T-cell (primary cell): ENCODE measurements at regions of chr3 and their contacts with region 1.

Region 1: DNA sequence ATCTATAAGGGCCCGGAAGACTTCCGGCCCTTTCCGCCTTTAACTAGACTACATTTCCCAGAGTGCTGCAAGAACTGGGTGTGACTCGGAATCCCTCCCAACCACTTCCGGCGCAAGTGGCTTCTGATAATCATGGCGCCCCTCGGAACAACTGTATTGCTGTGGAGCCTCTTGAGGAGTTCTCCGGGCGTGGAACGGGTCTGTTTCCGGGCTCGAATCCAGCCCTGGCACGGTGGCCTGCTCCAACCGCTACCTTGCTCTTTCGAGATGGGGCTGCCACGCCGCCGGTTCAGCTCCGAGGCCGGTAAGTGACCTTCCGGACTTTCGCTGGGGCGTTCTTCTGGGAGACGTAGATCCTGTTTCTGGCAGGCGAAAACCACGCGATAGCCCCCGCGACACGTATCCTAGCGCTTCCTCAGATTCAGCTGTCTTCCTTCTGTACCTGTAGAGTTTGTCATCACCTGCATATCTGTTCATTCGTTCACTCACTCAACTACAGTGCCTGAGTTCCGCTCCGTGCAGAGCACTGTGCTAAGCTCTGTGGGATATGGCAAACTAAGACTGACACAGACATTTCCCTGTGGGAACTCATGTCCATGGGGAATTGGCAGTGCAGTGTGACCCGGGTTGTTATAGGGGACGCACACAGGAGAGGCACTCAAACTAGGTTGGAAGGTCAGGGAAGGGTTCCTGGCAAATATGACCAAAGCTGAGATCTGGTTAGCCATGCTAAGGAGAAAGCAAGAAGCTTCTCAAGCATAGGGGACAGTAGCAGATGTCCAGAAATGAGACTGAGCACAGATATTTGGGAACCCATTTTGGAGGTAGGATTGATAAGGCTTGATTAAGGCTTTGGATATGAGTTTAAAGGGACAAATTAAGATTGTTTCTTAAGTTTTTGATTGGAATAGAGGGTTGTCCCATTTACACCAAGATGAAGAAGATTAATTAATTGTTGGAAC is at the start of gene MRPS22:
- DNase-seq: peak; percentile 56 to 88 (median 78)
- ATAC-seq: peak; percentile 97 to 100 (median 99)
- H3K4me3 ChIP-seq: peak within 1 kb of the TSS; percentile 75 to 99
- H3K4me3 Mint-ChIP-seq: peak within 1 kb of the TSS in 1 of 3 donors; percentile 46
- H3K27ac ChIP-seq: peak within 1 kb of the TSS; percentile 60
- H3K27ac Mint-ChIP-seq: peak within 1 kb of the TSS in 1 of 2 donors; percentile 24
- H3K4me1 ChIP-seq: peaks cover 17 to 18% of the 10 kb centered on the region in 2 experiments
- H3K4me1 Mint-ChIP-seq: peaks cover 8 to 15% (median 12%) of the 10 kb centered on the region in 3 donors
- H3K27me3 ChIP-seq: peaks cover 0 to 5% of the 10 kb centered on the region in 2 experiments
- H3K27me3 Mint-ChIP-seq: peaks cover 3 to 5% of the 10 kb centered on the region in 2 donors
- total RNA-seq, gene MRPS22: 32.4 to 36.9 (median 33.9) TPM

Region 2: DNA sequence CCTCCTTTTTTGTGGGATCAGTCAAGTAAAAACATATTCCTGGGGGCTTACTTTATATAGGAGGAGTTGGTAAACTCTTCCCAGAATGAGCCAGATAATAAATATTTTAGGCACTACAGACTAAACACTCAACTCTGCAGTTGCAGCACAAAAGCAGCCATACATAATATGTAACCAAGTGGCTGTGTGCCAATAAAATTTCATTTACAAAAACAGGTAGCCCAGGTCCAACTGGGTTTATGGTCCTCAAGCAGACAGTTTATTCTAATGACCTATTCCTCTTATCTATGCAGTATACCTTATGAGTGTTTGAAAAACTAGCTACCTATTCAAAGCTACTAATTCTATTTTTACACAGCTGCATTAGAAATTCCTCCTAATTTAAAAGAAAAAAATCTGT is 673.8 kb before region 1 on chr3:
- CTCF ChIA-PET with region 1: no interaction called
- POLR2A ChIA-PET with region 1: interaction called in 1 of 2 experiments, 12 read pairs
- DNase-seq: no peak
- ATAC-seq: no peak
- H3K4me3 ChIP-seq: no peak overlapping the region
- H3K4me3 Mint-ChIP-seq: no peak overlapping the region
- H3K27ac ChIP-seq: no peak overlapping the region
- H3K27ac Mint-ChIP-seq: no peak overlapping the region
- H3K4me1 ChIP-seq: no peaks in the 10 kb centered on the region
- H3K4me1 Mint-ChIP-seq: peaks cover 0 to 6% (median 0%) of the 10 kb centered on the region in 3 donors
- H3K27me3 ChIP-seq: no peaks in the 10 kb centered on the region
- H3K27me3 Mint-ChIP-seq: no peaks in the 10 kb centered on the region

Region 3: DNA sequence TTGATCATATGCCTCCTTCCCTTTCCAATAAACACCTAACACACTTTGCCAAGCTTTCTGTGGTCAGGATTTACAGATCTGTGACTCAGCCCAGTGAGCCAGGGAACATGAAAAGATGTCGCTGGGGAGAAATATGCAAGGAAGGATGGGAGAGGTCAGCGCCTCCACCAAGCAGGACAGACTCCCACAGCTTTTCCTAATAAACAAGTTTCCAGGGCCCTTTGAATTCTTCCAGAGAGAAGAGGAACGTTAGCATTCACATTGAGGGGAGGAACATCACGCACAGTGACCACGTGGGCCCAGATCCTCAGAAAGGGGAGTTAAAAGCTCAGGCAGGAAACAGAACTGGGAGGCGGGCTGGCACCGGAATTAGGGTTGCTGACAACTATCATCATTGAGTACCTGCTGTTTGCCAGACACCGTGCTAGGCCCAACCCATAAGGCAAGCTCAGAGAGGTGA is 33.7 kb before region 1 on chr3:
- CTCF ChIA-PET with region 1: no interaction called
- POLR2A ChIA-PET with region 1: no interaction called
- DNase-seq: no peak
- ATAC-seq: no peak
- H3K4me3 ChIP-seq: no peak overlapping the region
- H3K4me3 Mint-ChIP-seq: no peak overlapping the region
- H3K27ac ChIP-seq: no peak overlapping the region
- H3K27ac Mint-ChIP-seq: no peak overlapping the region
- H3K4me1 ChIP-seq: no peaks in the 10 kb centered on the region
- H3K4me1 Mint-ChIP-seq: no peaks in the 10 kb centered on the region
- H3K27me3 ChIP-seq: peaks cover 0 to 18% of the 10 kb centered on the region in 2 experiments
- H3K27me3 Mint-ChIP-seq: peaks cover 16% of the 10 kb centered on the region in 2 donors

Region 4: GRCh38 chr3:139561959-139562676 is 217.9 kb after region 1 on chr3:
- CTCF ChIA-PET with region 1: no interaction called
- POLR2A ChIA-PET with region 1: no interaction called
- DNase-seq: no peak
- ATAC-seq: no peak
- H3K4me3 ChIP-seq: no peak overlapping the region
- H3K4me3 Mint-ChIP-seq: no peak overlapping the region
- H3K27ac ChIP-seq: no peak overlapping the region
- H3K27ac Mint-ChIP-seq: no peak overlapping the region
- H3K4me1 ChIP-seq: no peaks in the 10 kb centered on the region
- H3K4me1 Mint-ChIP-seq: no peaks in the 10 kb centered on the region
- H3K27me3 ChIP-seq: no peaks in the 10 kb centered on the region
- H3K27me3 Mint-ChIP-seq: no peaks in the 10 kb centered on the region

Region 5: DNA sequence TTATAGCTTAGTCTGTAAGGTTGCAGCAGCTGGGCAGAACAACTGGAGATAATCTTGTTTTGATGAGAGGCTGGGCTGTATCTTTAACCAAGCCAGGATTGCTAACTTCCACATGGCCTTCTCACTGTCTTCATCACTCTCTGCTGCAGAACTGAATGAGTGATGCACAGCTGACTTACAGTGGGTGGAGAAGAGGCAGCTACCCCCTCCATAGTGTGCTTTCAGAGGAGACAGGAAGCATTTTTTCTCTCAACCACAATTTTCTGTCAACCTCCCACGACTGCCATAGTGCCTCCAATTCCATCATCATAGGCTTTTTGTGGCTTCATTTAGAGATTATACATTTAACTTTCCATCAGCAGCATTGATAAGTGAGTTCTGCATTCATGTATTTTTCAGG is 759.0 kb after region 1 on chr3:
- CTCF ChIA-PET with region 1: no interaction called
- POLR2A ChIA-PET with region 1: no interaction called
- DNase-seq: no peak
- ATAC-seq: no peak
- H3K4me3 ChIP-seq: no peak overlapping the region
- H3K4me3 Mint-ChIP-seq: no peak overlapping the region
- H3K27ac ChIP-seq: no peak overlapping the region
- H3K27ac Mint-ChIP-seq: no peak overlapping the region
- H3K4me1 ChIP-seq: no peaks in the 10 kb centered on the region
- H3K4me1 Mint-ChIP-seq: no peaks in the 10 kb centered on the region
- H3K27me3 ChIP-seq: no peaks in the 10 kb centered on the region
- H3K27me3 Mint-ChIP-seq: peaks cover 0 to 14% of the 10 kb centered on the region in 2 donors